ENCODE measurements at regions of chr3 and their contacts with region 1.

Region 1: DNA sequence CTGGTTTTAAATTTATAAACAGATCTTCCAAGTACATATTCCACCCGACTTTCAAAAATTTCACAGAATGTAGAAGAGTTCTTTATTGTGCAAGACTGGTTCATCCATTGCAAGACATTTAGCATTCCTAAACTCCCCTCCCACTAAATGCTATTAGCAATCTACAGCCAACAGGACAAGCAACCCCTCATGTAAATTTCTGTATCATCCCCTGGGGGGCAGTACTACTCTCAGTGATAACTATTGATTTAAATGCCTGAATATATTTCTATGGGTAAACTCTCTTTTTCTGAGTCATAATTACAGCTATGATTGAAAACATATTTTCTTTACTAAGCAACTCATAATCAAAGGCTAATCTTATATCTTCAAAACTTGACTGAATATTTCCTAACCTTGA is 10.7 kb upstream of the SLC15A2 start:
- DNase-seq: no peak
- H3K4me3 Mint-ChIP-seq: no peak overlapping the region
- H3K27ac Mint-ChIP-seq: no peak overlapping the region
- H3K4me1 Mint-ChIP-seq: no peaks in the 10 kb centered on the region
- H3K27me3 Mint-ChIP-seq: no peaks in the 10 kb centered on the region

Region 2: DNA sequence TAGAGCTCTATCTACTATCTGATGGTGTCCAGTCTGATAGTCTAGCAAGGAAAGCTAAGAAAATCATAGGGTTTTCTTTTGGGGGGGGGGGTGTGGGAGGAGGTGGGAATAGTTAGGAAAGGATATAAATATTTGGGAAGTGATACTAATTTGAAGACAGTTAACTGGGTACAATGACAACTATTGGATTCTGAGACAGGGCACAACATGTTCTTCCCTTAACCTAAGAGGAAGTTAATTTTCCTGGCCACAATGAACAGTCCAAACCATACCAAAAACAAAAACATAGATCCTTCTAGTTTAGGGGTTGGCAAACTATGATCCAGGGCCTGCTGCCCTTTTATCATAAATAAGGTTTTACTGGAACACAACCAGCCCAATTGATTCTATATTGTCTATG is 212.8 kb before region 1 on chr3:
- intact Hi-C with region 1: no loop called
- DNase-seq: no peak
- H3K4me3 Mint-ChIP-seq: no peak overlapping the region
- H3K27ac Mint-ChIP-seq: no peak overlapping the region
- H3K4me1 Mint-ChIP-seq: no peaks in the 10 kb centered on the region
- H3K27me3 Mint-ChIP-seq: no peaks in the 10 kb centered on the region

Region 3: DNA sequence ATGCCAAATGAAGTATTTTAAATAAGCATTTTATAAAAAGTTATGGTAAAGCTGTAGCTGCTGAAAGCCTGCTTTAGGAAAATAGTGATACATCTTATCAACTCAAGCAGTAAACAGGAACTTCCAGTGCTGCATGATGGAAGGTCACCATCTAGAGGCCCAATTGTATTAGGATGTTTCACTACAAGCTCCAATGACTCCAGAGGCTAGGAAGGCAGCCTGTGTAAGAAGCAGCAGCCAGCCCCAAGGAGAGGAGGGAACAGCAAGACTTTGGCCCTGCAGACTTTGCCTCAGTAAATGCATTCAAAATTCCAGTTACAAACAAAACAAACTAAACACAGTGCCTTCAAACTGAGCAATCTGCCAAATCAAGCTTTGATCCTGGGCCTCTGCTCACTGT is 106.4 kb after region 1 on chr3:
- intact Hi-C with region 1: loop called (anchors 2 kb)
- DNase-seq: no peak
- H3K4me3 Mint-ChIP-seq: no peak overlapping the region
- H3K27ac Mint-ChIP-seq: no peak overlapping the region
- H3K4me1 Mint-ChIP-seq: peaks cover 25% of the 10 kb centered on the region
- H3K27me3 Mint-ChIP-seq: peaks cover 3% of the 10 kb centered on the region

Region 4: GRCh38 chr3:122030381-122031122 is 147.0 kb after region 1 on chr3:
- intact Hi-C with region 1: loop called (anchors 1 kb)
- DNase-seq: peak; percentile 27
- H3K4me3 Mint-ChIP-seq: peak overlapping the region; percentile 20
- H3K27ac Mint-ChIP-seq: peak overlapping the region; percentile 85
- H3K4me1 Mint-ChIP-seq: peaks cover 17% of the 10 kb centered on the region
- H3K27me3 Mint-ChIP-seq: peaks cover 5% of the 10 kb centered on the region

Region 5: DNA sequence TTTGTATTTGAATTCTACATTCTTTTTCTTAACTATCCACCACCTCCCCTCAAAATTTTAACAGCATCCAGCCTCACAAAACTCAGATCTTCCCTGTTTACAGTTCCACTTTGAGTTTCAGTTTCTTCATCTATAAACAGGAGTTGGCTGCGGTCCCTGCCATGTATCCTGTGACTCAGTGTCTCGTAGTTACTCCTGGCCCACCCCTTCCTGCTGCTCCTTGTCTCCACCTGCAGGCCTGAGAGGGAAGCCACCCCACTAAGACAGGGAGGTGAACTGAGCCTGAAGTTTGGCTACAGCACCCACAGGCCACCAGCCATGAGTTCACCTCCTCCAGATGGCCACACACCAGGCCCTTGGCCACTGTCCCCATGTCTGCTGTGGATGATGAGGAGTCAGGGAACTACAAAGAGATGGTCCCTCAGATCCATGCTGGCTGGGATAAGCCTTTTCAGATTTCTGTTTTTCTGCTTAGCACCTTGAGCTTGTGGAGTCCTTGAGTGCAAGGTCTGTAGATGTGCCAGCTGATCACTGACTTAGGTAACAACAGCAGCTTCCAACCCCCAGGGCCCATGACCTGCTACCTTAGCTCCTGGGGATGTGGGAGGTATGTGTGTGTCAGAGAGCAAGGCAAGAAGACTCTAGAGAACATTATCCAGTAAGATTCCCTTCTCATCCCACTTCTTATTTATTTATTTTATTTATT is 209.1 kb after region 1 on chr3:
- intact Hi-C with region 1: loop called (anchors 1 kb)
- DNase-seq: peak; percentile 55
- H3K4me3 Mint-ChIP-seq: peak overlapping the region; percentile 32
- H3K27ac Mint-ChIP-seq: peak overlapping the region; percentile 90
- H3K4me1 Mint-ChIP-seq: peaks cover 40% of the 10 kb centered on the region
- H3K27me3 Mint-ChIP-seq: no peaks in the 10 kb centered on the region

Region 6: GRCh38 chr3:122299872-122300460 is 416.5 kb after region 1 on chr3:
- intact Hi-C with region 1: loop called (anchors 2 kb)
- DNase-seq: no peak
- H3K4me3 Mint-ChIP-seq: no peak overlapping the region
- H3K27ac Mint-ChIP-seq: no peak overlapping the region
- H3K4me1 Mint-ChIP-seq: peaks cover 28% of the 10 kb centered on the region
- H3K27me3 Mint-ChIP-seq: no peaks in the 10 kb centered on the region

Measured in activated T-helper 1 cell treated with anti-CD3 and anti-CD28 coated beads, Interleukin-12 subunit alpha, Interleukin-12 subunit beta, Interleukin-2, Interleukin-4 antibody, amounts not matched to agents 30 ng/mL and 10 ng/mL and 1 ng/mL, durations not matched to agents 14 hours and 24 hours and 36 hours (primary cell).